B cell (primary cell): ENCODE measurements at regions of chr1 and their contacts with region 1.

Region 1: DNA sequence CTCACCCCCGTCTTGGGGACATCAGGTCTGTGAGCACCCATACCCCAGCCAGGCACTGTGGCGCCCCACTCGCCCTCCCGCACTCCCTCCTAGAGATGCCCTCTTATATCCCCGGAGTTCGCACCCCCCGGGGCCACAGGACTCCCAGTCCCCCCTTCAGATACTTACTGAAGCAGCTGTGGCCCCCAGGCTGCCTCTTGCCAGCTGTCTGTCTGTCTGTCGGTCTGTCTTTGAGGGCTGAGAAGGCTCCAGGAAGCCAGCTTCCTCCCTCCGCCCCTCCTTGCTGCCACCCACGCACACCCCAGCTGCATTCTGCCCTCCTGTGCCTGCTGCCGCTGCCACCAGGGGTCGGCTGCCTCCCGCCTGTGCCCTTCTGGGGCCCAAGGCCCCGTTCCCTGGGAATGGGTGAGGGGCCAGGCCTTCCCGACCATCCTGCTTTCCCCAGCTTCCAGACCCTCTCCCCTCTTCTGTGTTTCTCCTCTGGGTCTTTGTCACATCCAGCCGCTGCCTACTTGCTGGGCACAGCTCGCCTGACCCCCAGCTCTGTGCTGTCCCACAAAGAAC is at the start of gene PTPN7:
- DNase-seq: peak; percentile 82
- ATAC-seq: peak; percentile 56
- H3K4me3 ChIP-seq: peak within 1 kb of the TSS; percentile 69 to 92 (median 73)
- H3K4me3 Mint-ChIP-seq: peak within 1 kb of the TSS; percentile 93
- H3K27ac ChIP-seq: peak within 1 kb of the TSS; percentile 89 to 93
- H3K27ac Mint-ChIP-seq: peak within 1 kb of the TSS; percentile 94
- H3K4me1 ChIP-seq: peaks cover 66 to 77% of the 10 kb centered on the region in 2 donors
- H3K4me1 Mint-ChIP-seq: peaks cover 83% of the 10 kb centered on the region
- H3K27me3 ChIP-seq: no peaks in the 10 kb centered on the region
- H3K27me3 Mint-ChIP-seq: no peaks in the 10 kb centered on the region
- CTCF ChIP-seq: peak; percentile 69
- total RNA-seq, gene PTPN7: 16.0 and 16.5 TPM in 2 replicates

Region 2: DNA sequence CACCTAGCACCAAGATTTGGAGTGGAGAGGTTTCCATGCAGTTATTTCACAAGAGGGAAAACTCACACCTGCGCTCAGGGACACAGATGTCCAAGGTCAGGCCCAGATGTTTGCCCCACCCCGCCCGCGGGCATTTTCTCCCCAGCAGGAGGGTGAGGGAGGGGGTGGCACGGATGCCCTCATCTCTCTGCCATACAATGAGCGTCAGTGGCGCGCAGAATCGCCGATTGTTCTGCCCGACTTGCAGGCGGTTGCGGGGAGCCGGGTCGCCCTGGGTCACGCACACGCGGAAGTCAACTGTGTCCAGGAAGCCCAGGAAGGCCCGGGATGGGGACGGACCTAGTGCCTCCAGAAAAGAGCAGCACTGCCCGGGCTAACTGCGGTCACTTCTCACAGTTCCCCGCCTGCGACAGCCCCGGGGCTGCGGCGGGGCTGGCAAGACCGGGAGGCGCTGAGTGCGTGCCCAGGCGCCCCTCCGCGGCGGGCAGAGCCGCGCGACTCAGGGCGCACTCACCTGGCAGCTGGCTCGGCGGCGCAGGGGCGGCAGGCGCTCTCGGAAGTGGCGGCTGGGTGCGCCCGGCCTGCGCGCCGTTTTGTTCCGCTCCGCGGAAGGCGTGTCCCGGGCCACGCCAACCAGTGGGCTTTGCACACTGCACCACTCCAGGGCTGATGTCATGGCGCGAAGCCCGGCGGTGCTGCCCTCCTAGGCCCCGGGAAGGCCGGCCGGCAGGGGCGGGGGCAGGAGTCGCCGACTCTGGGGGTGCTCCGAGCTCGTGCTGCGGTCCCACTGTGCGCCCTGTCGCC is 653.7 kb before region 1 on chr1 and contains the start of gene CSRP1:
- CTCF ChIA-PET with region 1: no interaction called
- POLR2A ChIA-PET with region 1: no interaction called
- intact Hi-C with region 1: loop called (anchors 5 kb)
- DNase-seq: peak; percentile 85
- ATAC-seq: peak; percentile 96
- H3K4me3 ChIP-seq: peak within 1 kb of the TSS; percentile 26 to 87 (median 67)
- H3K4me3 Mint-ChIP-seq: peak within 1 kb of the TSS; percentile 94
- H3K27ac ChIP-seq: peak within 1 kb of the TSS; percentile 12 to 67
- H3K27ac Mint-ChIP-seq: peak within 1 kb of the TSS; percentile 86
- H3K4me1 ChIP-seq: peaks cover 20 to 28% of the 10 kb centered on the region in 2 donors
- H3K4me1 Mint-ChIP-seq: peaks cover 35% of the 10 kb centered on the region
- H3K27me3 ChIP-seq: no peaks in the 10 kb centered on the region
- H3K27me3 Mint-ChIP-seq: no peaks in the 10 kb centered on the region
- CTCF ChIP-seq: peak; percentile 3
- total RNA-seq, gene CSRP1: 23.8 and 34.7 TPM in 2 replicates

Region 3: GRCh38 chr1:201982623-201983379 is 177.7 kb before region 1 on chr1 and contains the start of gene RNPEP:
- CTCF ChIA-PET with region 1: no interaction called
- POLR2A ChIA-PET with region 1: no interaction called
- intact Hi-C with region 1: loop called (anchors 10 kb)
- DNase-seq: peak; percentile 79
- ATAC-seq: peak; percentile 78
- H3K4me3 ChIP-seq: peak within 1 kb of the TSS; percentile 53 to 94 (median 67)
- H3K4me3 Mint-ChIP-seq: peak within 1 kb of the TSS; percentile 97
- H3K27ac ChIP-seq: peak within 1 kb of the TSS; percentile 6 to 54
- H3K27ac Mint-ChIP-seq: peak within 1 kb of the TSS; percentile 92
- H3K4me1 ChIP-seq: peaks cover 11 to 13% of the 10 kb centered on the region in 2 donors
- H3K4me1 Mint-ChIP-seq: peaks cover 27% of the 10 kb centered on the region
- H3K27me3 ChIP-seq: no peaks in the 10 kb centered on the region
- H3K27me3 Mint-ChIP-seq: no peaks in the 10 kb centered on the region
- CTCF ChIP-seq: no peak
- total RNA-seq, gene RNPEP: 42.9 and 43.1 TPM in 2 replicates

Region 4: GRCh38 chr1:202085682-202086404 is 74.6 kb before region 1 on chr1:
- CTCF ChIA-PET with region 1: no interaction called
- POLR2A ChIA-PET with region 1: no interaction called
- intact Hi-C with region 1: no loop called
- DNase-seq: no peak
- ATAC-seq: no peak
- H3K4me3 ChIP-seq: no peak overlapping the region
- H3K4me3 Mint-ChIP-seq: no peak overlapping the region
- H3K27ac ChIP-seq: no peak overlapping the region
- H3K27ac Mint-ChIP-seq: no peak overlapping the region
- H3K4me1 ChIP-seq: no peaks in the 10 kb centered on the region
- H3K4me1 Mint-ChIP-seq: no peaks in the 10 kb centered on the region
- H3K27me3 ChIP-seq: peaks cover 0 to 2% (median 0%) of the 10 kb centered on the region in 4 experiments
- H3K27me3 Mint-ChIP-seq: peaks cover 12% of the 10 kb centered on the region
- CTCF ChIP-seq: no peak

Region 5: GRCh38 chr1:202184750-202185460 is 24.4 kb after region 1 on chr1:
- CTCF ChIA-PET with region 1: interaction called, 37 read pairs
- POLR2A ChIA-PET with region 1: no interaction called
- intact Hi-C with region 1: loop called (anchors 2 kb)
- DNase-seq: peak; percentile 71
- ATAC-seq: peak; percentile 50
- H3K4me3 ChIP-seq: no peak overlapping the region
- H3K4me3 Mint-ChIP-seq: no peak overlapping the region
- H3K27ac ChIP-seq: no peak overlapping the region
- H3K27ac Mint-ChIP-seq: no peak overlapping the region
- H3K4me1 ChIP-seq: peaks cover 5 to 6% of the 10 kb centered on the region in 2 donors
- H3K4me1 Mint-ChIP-seq: peaks cover 9% of the 10 kb centered on the region
- H3K27me3 ChIP-seq: peaks cover 0 to 31% (median 5%) of the 10 kb centered on the region in 4 experiments
- H3K27me3 Mint-ChIP-seq: peaks cover 46% of the 10 kb centered on the region
- CTCF ChIP-seq: peak; percentile 78

Region 6: GRCh38 chr1:202968840-202969295 is 808.4 kb after region 1 on chr1:
- CTCF ChIA-PET with region 1: no interaction called
- POLR2A ChIA-PET with region 1: no interaction called
- intact Hi-C with region 1: loop called (anchors 10 kb)
- DNase-seq: peak; percentile 90
- ATAC-seq: peak; percentile 62
- H3K4me3 ChIP-seq: peak overlapping the region in 4 of 5 experiments; percentile 8 to 69 (median 50)
- H3K4me3 Mint-ChIP-seq: peak overlapping the region; percentile 97
- H3K27ac ChIP-seq: peak overlapping the region; percentile 73 to 75
- H3K27ac Mint-ChIP-seq: peak overlapping the region; percentile 95
- H3K4me1 ChIP-seq: peaks cover 28 to 38% of the 10 kb centered on the region in 2 donors
- H3K4me1 Mint-ChIP-seq: peaks cover 39% of the 10 kb centered on the region
- H3K27me3 ChIP-seq: no peaks in the 10 kb centered on the region
- H3K27me3 Mint-ChIP-seq: no peaks in the 10 kb centered on the region
- CTCF ChIP-seq: peak; percentile 74